Activated T-helper 2 cell treated with anti-CD3 and anti-CD28 coated beads, Interferon-gamma antibody, Interleukin-2, Interleukin-4, amounts not matched to agents 10 μg/mL and 5 μg/mL and 100 μg/mL, durations not matched to agents 14 hours and 24 hours and 36 hours (primary cell): ENCODE measurements at regions of chr4 and their contacts with region 1.

Region 1: GRCh38 chr4:113684534-113685091 is 76.9 kb downstream of the CAMK2D start:
- DNase-seq: no peak
- H3K4me3 Mint-ChIP-seq: peak overlapping the region; percentile 11
- H3K27ac Mint-ChIP-seq: peak overlapping the region; percentile 85
- H3K4me1 Mint-ChIP-seq: peaks cover 57% of the 10 kb centered on the region
- H3K27me3 Mint-ChIP-seq: no peaks in the 10 kb centered on the region

Region 2: GRCh38 chr4:112284662-112285411 is 1399.8 kb before region 1 on chr4:
- intact Hi-C with region 1: loop called (anchors 5 kb)
- DNase-seq: no peak
- H3K4me3 Mint-ChIP-seq: peak overlapping the region; percentile 86
- H3K27ac Mint-ChIP-seq: peak overlapping the region; percentile 78
- H3K4me1 Mint-ChIP-seq: peaks cover 63% of the 10 kb centered on the region
- H3K27me3 Mint-ChIP-seq: no peaks in the 10 kb centered on the region

Region 3: GRCh38 chr4:113445286-113445685 is 239.3 kb before region 1 on chr4:
- intact Hi-C with region 1: loop called (anchors 1 kb)
- DNase-seq: no peak
- H3K4me3 Mint-ChIP-seq: no peak overlapping the region
- H3K27ac Mint-ChIP-seq: peak overlapping the region; percentile 80
- H3K4me1 Mint-ChIP-seq: peaks cover 25% of the 10 kb centered on the region
- H3K27me3 Mint-ChIP-seq: no peaks in the 10 kb centered on the region

Region 4: GRCh38 chr4:113457886-113458285 is 226.7 kb before region 1 on chr4:
- intact Hi-C with region 1: no loop called
- DNase-seq: no peak
- H3K4me3 Mint-ChIP-seq: no peak overlapping the region
- H3K27ac Mint-ChIP-seq: no peak overlapping the region
- H3K4me1 Mint-ChIP-seq: peaks cover 22% of the 10 kb centered on the region
- H3K27me3 Mint-ChIP-seq: no peaks in the 10 kb centered on the region

Region 5: GRCh38 chr4:113539408-113539807 is 145.2 kb before region 1 on chr4:
- intact Hi-C with region 1: loop called (anchors 1 kb)
- DNase-seq: no peak
- H3K4me3 Mint-ChIP-seq: no peak overlapping the region
- H3K27ac Mint-ChIP-seq: peak overlapping the region; percentile 85
- H3K4me1 Mint-ChIP-seq: peaks cover 45% of the 10 kb centered on the region
- H3K27me3 Mint-ChIP-seq: no peaks in the 10 kb centered on the region

Region 6: GRCh38 chr4:113625902-113626301 is 58.7 kb before region 1 on chr4:
- intact Hi-C with region 1: loop called (anchors 1 kb)
- DNase-seq: no peak
- H3K4me3 Mint-ChIP-seq: peak overlapping the region; percentile 1
- H3K27ac Mint-ChIP-seq: peak overlapping the region; percentile 52
- H3K4me1 Mint-ChIP-seq: peaks cover 45% of the 10 kb centered on the region
- H3K27me3 Mint-ChIP-seq: no peaks in the 10 kb centered on the region

Region 7: DNA sequence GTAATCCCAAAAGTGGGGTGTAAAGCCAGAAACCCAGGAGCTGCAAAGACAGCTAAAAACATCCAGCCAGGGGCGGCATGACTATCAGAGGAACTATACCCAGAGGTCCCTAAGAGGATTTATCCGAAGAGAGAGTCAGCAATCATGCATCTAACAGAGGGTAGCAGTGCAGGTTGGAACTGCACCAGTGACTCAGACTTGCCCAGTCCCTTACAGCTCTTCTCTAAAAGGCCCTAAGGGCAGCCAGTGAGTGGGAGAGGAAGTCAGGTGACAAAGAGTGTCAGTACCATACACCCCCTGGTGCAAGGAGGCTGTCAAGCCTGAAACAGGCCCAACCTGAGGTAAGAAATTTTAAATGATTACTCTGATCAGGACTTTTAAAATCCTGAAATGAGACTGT is 11.2 kb before region 1 on chr4:
- intact Hi-C with region 1: loop called (anchors 1 kb)
- DNase-seq: peak; percentile 19
- H3K4me3 Mint-ChIP-seq: no peak overlapping the region
- H3K27ac Mint-ChIP-seq: peak overlapping the region; percentile 47
- H3K4me1 Mint-ChIP-seq: peaks cover 45% of the 10 kb centered on the region
- H3K27me3 Mint-ChIP-seq: no peaks in the 10 kb centered on the region

Region 8: DNA sequence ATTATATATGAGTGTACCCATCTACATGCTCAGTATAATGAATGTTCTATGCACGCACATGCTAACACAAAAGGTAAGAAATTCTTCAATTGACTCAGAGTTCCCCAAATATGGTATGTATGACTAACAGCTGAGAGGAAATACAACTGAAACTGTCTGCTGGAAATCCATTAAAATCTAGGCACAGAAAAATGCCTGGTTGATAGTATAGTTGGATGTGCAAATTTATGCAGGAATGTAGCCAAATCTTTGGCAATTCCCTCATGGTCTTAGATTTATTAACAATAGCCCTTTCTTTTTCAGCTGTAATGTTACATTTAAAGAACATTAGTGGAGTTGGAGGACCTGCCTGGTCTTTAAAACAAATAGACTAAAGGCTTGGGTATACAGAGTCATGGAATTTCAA is 71.4 kb after region 1 on chr4:
- intact Hi-C with region 1: loop called (anchors 1 kb)
- DNase-seq: no peak
- H3K4me3 Mint-ChIP-seq: peak overlapping the region; percentile 10
- H3K27ac Mint-ChIP-seq: peak overlapping the region; percentile 40
- H3K4me1 Mint-ChIP-seq: peaks cover 38% of the 10 kb centered on the region
- H3K27me3 Mint-ChIP-seq: no peaks in the 10 kb centered on the region

Region 9: DNA sequence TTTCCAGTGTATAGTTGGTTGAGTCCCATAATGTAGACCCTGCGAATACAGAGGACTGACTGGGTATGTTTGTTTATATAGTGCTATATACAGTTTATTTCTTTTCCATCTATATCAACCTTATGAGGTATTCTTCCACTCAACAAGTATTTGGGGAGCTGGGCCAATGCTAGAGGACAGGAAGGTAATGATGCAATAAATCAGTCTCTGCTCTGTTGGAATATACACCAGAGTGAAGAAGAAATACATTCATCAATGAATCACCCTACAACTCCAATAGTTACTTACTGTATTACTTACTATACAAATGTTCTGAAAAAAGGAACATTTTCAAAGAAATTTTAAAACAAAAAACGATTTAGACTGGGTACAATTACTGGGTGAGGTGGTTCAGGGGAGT is 297.0 kb after region 1 on chr4:
- intact Hi-C with region 1: no loop called
- DNase-seq: no peak
- H3K4me3 Mint-ChIP-seq: no peak overlapping the region
- H3K27ac Mint-ChIP-seq: no peak overlapping the region
- H3K4me1 Mint-ChIP-seq: peaks cover 11% of the 10 kb centered on the region
- H3K27me3 Mint-ChIP-seq: peaks cover 64% of the 10 kb centered on the region